Activated T-helper 1 cell treated with anti-CD3 and anti-CD28 coated beads, Interleukin-12 subunit alpha, Interleukin-12 subunit beta, Interleukin-2, Interleukin-4 antibody, amounts not matched to agents 30 ng/mL and 10 ng/mL and 1 ng/mL, durations not matched to agents 14 hours and 24 hours and 36 hours (primary cell): ENCODE measurements at regions of chr6 and their contacts with region 1.

Region 1: DNA sequence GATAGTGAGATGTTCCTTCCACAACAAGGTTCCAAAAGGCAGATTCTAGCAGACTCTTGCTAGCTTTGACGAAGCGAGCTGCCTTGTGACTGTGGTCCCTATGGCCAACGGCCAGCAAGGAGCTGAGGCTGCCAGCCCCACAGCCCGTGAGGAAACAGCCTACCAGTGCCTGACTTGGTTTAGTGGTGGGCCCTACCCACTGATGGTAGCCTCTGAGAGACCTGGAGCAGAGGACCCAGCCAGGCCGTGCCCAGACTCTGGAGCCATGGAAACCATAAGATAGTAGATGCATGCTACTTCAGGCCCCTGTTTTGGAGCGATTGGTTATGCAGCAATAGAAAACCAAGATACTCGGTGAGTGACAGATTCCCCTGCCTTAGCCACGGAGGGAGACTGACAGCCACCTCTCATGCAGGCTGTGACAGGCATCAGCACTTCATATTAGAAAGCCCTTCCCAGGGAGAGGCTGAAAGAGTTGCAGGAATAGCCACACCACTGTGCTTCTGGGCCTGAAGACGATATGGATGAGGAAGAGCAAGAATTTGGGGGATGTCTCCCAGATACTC is 19.2 kb downstream of the PSMG4 start:
- DNase-seq: no peak
- H3K4me3 Mint-ChIP-seq: no peak overlapping the region
- H3K27ac Mint-ChIP-seq: no peak overlapping the region
- H3K4me1 Mint-ChIP-seq: no peaks in the 10 kb centered on the region
- H3K27me3 Mint-ChIP-seq: no peaks in the 10 kb centered on the region

Region 2: GRCh38 chr6:3194535-3195419 is 83.2 kb before region 1 on chr6:
- intact Hi-C with region 1: no loop called
- DNase-seq: no peak
- H3K4me3 Mint-ChIP-seq: no peak overlapping the region
- H3K27ac Mint-ChIP-seq: no peak overlapping the region
- H3K4me1 Mint-ChIP-seq: no peaks in the 10 kb centered on the region
- H3K27me3 Mint-ChIP-seq: peaks cover 8% of the 10 kb centered on the region

Region 3: DNA sequence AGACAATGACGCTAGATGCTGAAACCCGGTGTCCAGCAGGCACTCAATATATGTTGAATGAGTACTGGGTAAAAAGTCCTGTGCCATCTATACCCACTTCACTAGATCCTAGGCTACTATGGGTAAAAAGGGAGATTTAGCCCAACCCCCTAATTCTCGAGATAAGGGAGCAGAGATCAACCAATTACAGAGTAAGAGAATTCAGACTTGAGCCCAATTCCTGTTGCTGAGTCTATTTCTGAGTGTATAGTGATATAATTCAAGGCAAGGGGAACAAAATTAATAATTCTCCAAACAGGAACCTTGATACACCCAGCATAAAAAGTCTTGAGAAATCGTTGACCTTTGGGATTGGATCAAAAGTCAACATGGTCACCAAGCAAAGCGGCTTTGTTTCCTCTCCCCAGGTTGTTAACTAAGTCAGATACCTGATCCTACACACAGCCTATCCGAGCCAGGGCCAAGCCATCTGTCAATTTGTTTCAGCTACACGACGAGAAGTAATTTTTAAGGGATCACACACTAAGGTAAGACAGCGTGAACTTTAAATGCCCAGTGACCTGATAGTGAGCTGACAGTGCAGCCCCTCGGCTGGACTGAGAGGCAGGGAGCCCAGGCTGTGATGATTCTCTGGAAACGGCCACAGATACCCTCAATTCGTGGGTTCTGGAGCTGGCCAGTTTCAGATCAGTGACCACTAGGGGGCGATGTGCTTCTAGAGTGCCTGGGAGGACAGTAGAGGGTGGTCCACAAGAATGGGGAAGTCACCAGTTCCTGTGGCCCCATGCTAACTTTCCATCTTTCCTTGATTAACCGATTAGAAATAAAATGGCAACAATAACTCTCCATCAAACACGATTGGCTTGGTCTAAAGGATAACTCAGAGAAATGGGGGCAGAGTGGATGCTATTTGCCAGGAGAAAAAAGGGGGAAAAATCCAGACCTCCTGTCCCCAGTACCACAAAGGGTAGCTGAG is 132.7 kb after region 1 on chr6:
- intact Hi-C with region 1: loop called (anchors 5 kb)
- DNase-seq: peak; percentile 19
- H3K4me3 Mint-ChIP-seq: no peak overlapping the region
- H3K27ac Mint-ChIP-seq: no peak overlapping the region
- H3K4me1 Mint-ChIP-seq: peaks cover 9% of the 10 kb centered on the region
- H3K27me3 Mint-ChIP-seq: no peaks in the 10 kb centered on the region

Region 4: DNA sequence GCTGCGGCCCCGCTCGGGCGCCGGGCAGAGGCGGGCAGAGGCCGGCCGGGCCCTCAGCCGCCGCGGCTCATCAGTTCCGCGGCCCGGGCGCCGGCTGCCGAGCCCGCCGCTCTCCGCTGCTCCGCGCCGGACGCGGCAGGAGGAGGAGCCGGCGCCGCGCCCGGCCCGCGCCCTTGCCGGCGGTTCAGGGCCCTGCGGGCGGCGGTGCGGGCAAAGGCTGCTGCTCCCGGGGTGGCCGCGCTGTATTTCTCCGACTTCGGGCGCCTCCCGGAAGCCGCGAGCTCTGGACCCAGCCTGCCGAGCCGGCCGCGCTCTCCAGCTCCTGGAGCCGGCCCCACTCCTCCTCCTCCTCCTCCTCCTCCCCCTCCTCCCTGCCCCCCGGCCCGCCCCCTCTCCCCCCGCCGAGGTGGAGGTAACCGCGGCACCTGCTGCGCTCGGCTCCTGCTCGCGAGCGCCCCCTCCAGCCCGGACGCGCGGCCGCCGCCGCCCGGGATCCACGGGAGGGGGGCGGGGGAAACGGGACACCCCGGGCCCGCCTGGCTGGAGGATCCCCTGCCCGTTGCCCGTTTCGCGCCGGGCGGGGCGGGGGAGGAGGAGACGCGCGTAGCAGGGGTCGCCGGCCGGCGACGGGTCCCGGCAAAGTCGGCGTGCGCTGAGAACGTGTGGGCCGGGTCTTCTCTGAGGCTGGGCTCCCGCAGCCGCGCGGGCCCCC is 179.0 kb after region 1 on chr6 and contains the start of gene SLC22A23:
- intact Hi-C with region 1: loop called (anchors 1 kb)
- DNase-seq: peak; percentile 42
- H3K4me3 Mint-ChIP-seq: peak within 1 kb of the TSS; percentile 81
- H3K27ac Mint-ChIP-seq: peak within 1 kb of the TSS; percentile 70
- H3K4me1 Mint-ChIP-seq: peaks cover 7% of the 10 kb centered on the region
- H3K27me3 Mint-ChIP-seq: peaks cover 46% of the 10 kb centered on the region
- total RNA-seq, gene SLC22A23: 0.05 and 0.39 TPM in 2 replicates

Region 5: DNA sequence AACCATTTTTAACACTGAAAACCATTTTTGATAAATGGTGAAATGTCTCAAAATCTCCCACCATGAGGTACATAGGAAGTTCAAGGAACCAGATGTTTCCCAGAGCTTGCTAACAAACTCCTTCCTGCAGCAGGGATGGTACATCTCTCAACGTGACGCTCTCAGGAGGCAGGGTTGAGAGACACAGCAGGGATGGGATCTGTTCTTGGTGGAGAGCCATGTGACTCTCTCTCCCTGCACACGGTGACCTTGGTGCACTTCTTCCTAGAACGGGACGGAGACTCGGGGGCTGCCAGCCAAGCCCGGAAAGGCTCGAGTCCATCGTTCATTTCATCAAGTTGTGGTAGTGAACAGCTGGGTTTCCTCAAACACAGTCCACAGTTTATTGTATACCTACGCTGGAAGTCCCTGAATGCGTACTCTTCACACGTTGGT is 665.4 kb after region 1 on chr6:
- intact Hi-C with region 1: no loop called
- DNase-seq: no peak
- H3K4me3 Mint-ChIP-seq: no peak overlapping the region
- H3K27ac Mint-ChIP-seq: no peak overlapping the region
- H3K4me1 Mint-ChIP-seq: no peaks in the 10 kb centered on the region
- H3K27me3 Mint-ChIP-seq: peaks cover 37% of the 10 kb centered on the region

Region 6: DNA sequence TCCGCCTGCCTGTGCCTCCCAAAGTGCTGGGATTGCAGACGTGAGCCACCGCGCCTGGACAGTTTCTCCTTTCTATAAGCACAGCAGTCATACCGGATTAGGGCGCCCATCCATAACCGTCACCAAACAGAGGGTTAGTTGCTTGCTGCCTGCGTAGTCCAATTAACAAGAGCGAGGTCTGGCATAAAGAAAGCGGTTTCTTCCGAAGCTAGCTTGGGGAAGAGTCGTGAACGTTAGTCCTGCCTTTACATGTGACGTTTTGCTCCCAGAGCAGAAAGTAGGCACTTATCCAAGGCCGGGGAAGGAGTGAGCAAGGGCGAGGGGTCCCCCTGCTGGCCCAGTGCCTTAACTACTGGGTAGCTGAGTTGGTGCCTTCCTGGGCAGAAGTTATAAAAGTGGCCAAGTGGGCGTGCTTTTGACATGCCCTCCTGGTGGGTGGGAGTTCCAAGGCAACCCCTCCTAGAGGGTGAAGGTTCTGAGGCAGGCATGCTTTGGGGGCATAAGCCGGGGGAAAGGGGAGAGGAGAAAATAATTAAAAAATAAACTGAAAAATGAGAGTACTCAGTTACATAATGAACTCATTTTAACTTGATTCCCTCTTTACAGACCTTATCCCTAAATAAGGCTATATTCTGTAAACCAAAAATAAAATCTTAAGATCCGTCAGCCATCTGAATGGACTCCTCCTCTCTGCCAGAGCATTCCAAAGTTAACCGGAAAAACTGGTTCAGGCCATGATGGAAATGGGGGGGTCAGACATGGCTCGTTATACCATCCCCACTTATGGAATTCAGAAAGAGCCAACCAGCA is 713.0 kb after region 1 on chr6:
- intact Hi-C with region 1: loop called (anchors 2 kb)
- DNase-seq: peak; percentile 53
- H3K4me3 Mint-ChIP-seq: no peak overlapping the region
- H3K27ac Mint-ChIP-seq: no peak overlapping the region
- H3K4me1 Mint-ChIP-seq: peaks cover 16% of the 10 kb centered on the region
- H3K27me3 Mint-ChIP-seq: no peaks in the 10 kb centered on the region